ENCODE measurements at regions of chr1 and their contacts with region 1.

Region 1: DNA sequence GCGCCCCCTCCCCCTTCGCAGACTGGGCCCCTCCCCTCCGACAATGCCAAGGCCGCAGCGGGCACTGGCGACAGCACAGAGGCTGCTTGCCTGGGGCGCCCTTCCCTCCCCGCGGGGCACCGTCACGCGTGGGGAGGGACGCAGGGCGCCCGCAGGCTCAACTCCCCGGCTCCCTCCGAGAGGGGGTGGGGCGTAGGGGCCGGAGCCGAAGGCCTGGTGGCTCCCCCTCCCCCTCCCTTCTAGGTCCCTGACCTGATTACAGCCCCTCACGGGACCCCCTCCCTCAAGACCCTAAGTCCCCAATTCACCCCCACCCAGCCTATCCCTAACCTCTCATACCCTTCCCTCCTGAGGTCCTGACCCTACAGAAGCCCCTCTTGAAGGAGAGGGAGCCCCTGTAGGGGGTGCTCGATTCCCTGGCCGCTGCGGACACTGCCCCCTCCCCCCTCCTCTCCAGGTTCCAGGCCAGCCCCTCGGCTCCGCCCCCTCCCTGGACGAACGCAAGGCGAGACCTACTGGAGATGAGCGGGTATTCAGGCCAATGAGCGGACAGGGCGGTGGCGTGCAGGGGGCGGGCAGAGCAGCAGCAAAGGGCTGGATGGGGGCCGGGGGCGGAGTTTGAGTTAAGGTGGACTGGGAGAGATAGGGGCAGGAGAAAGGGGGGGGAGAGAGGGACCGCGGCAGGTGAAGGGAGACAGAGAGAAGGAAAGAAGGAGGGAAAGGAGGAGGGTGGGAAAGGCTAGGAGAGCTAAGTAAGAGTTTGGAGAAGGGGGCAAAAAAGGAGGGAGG is 733 bp upstream of the ZBTB7B start:
- DNase-seq: peak; percentile 95 to 99 (median 97)
- ATAC-seq: peak; percentile 77
- H3K4me3 ChIP-seq: peak overlapping the region; percentile 75 to 99
- H3K4me3 Mint-ChIP-seq: peak overlapping the region; percentile 88
- H3K27ac ChIP-seq: peak overlapping the region; percentile 64 to 90
- H3K27ac Mint-ChIP-seq: peak overlapping the region; percentile 82
- H3K4me1 ChIP-seq: peaks cover 57% of the 10 kb centered on the region
- H3K4me1 Mint-ChIP-seq: peaks cover 59% of the 10 kb centered on the region
- H3K27me3 ChIP-seq: no peaks in the 10 kb centered on the region
- H3K27me3 Mint-ChIP-seq: no peaks in the 10 kb centered on the region
- CTCF ChIP-seq: no peak

Region 2: DNA sequence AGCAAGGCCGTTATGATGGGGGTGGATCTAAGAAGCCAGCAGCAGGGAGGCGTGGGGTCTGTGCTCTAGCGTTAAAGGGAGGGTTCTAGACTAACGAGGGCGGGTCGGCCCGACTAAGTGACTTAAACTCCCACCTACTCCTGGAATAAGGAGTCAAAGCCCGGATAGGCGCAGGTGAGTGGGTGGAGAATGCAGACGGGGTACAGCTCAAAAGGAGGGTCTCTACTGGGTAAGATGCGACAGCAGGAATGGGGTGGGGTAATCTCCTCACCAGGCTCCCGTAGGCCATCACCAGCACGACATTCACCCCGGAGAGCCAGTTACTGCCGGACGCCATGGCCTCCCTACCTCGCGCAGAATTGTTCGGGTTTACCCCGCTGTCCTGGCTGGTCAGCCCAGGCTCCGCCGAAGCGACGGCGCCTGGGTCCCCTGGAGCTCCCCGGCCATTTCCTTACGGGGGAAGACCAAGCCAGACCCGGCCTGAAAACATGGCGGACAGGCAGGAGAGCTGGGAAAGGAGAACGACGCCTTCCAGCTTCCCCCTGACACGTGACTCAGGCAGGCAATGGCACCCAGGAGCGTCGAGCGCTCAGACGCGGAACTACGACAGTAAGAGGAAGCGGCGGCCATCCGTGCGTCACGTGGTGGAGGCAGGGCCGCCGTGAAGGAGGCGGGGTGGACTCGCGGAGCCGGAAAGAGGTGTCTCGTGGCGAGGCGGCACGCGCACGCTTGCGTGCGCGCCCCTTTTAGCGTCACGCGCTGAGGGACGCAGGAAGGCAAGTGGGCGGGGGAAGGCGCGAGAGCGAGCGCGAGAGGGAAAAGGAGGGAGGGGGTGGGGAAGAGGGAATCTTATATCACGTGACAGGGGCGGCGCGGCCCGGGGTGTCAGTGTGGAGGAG is 781.5 kb before region 1 on chr1 and contains the start of gene UBAP2L:
- CTCF ChIA-PET with region 1: no interaction called
- POLR2A ChIA-PET with region 1: no interaction called
- intact Hi-C with region 1: loop called in 1 of 2 experiments (anchors 2 kb)
- DNase-seq: peak; percentile 97 to 100 (median 99)
- ATAC-seq: peak; percentile 82
- H3K4me3 ChIP-seq: peak within 1 kb of the TSS; percentile 68 to 93
- H3K4me3 Mint-ChIP-seq: peak within 1 kb of the TSS; percentile 95
- H3K27ac ChIP-seq: peak within 1 kb of the TSS; percentile 93 to 99
- H3K27ac Mint-ChIP-seq: peak within 1 kb of the TSS; percentile 99
- H3K4me1 ChIP-seq: peaks cover 54% of the 10 kb centered on the region
- H3K4me1 Mint-ChIP-seq: peaks cover 71% of the 10 kb centered on the region
- H3K27me3 ChIP-seq: no peaks in the 10 kb centered on the region
- H3K27me3 Mint-ChIP-seq: no peaks in the 10 kb centered on the region
- CTCF ChIP-seq: no peak
- total RNA-seq, gene UBAP2L: 212 to 226 TPM

Region 3: GRCh38 chr1:154955718-154956543 is 45.9 kb before region 1 on chr1 and contains the start of gene PBXIP1:
- CTCF ChIA-PET with region 1: interaction called, 18 read pairs
- POLR2A ChIA-PET with region 1: interaction called, 9 read pairs
- intact Hi-C with region 1: loop called (anchors 1 kb)
- DNase-seq: peak; percentile 65 to 96 (median 84)
- ATAC-seq: peak; percentile 40
- H3K4me3 ChIP-seq: peak within 1 kb of the TSS; percentile 71 to 76
- H3K4me3 Mint-ChIP-seq: peak within 1 kb of the TSS; percentile 99
- H3K27ac ChIP-seq: peak within 1 kb of the TSS; percentile 98
- H3K27ac Mint-ChIP-seq: peak within 1 kb of the TSS; percentile 99
- H3K4me1 ChIP-seq: peaks cover 60% of the 10 kb centered on the region
- H3K4me1 Mint-ChIP-seq: peaks cover 76% of the 10 kb centered on the region
- H3K27me3 ChIP-seq: no peaks in the 10 kb centered on the region
- H3K27me3 Mint-ChIP-seq: no peaks in the 10 kb centered on the region
- CTCF ChIP-seq: no peak
- total RNA-seq, gene PBXIP1: 315 to 319 TPM

Region 4: GRCh38 chr1:154982897-154983648 is 18.8 kb before region 1 on chr1 and contains the start of gene FLAD1:
- CTCF ChIA-PET with region 1: interaction called, 27 read pairs
- POLR2A ChIA-PET with region 1: interaction called, 8 read pairs
- intact Hi-C with region 1: loop called (anchors 1 kb)
- DNase-seq: peak; percentile 86 to 99 (median 94)
- ATAC-seq: peak; percentile 98
- H3K4me3 ChIP-seq: peak within 1 kb of the TSS; percentile 57 to 86
- H3K4me3 Mint-ChIP-seq: no peak within 1 kb of the TSS
- H3K27ac ChIP-seq: peak within 1 kb of the TSS; percentile 51 to 82
- H3K27ac Mint-ChIP-seq: no peak within 1 kb of the TSS
- H3K4me1 ChIP-seq: peaks cover 12% of the 10 kb centered on the region
- H3K4me1 Mint-ChIP-seq: peaks cover 12% of the 10 kb centered on the region
- H3K27me3 ChIP-seq: no peaks in the 10 kb centered on the region
- H3K27me3 Mint-ChIP-seq: no peaks in the 10 kb centered on the region
- CTCF ChIP-seq: no peak
- total RNA-seq, gene FLAD1: 17.4 to 19.0 TPM

Region 5: DNA sequence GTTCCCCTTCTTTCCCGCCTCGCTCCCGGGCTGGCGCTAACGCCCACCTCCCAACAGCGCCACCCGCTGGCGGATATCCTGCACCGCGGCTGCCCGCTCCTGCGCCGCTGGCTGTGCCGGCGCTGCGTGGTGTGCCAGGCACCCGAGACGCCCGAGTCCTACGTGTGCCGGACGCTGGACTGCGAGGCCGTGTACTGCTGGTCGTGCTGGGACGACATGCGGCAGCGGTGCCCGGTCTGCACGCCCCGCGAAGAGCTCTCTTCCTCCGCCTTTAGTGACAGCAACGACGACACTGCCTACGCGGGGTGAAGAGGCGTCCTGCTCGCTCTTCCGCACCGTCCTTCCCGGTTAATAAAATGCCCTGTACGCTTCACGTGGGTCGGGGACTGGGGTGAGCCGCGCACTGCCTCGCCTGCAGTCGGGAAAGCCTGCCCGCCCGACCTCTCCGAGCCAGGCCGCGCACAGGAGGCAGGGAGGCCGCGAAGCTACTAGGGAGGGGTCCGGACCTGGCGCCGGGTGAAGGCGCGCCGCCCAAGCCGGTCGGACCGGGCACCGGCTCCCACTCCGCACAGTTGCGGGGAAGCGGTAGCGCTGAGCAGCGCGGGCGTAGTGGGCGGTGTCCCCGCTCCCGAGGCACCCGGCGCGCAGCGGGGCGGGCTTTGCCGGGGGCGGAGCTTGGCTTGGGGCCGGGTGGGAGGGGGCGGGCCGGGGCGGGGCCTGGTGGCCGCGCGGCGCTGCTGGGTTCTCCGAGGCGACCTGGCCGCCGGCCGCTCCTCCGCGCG is 48.9 kb after region 1 on chr1 and contains the start of gene ADAM15:
- CTCF ChIA-PET with region 1: no interaction called
- POLR2A ChIA-PET with region 1: interaction called, 3 read pairs
- intact Hi-C with region 1: loop called (anchors 1 to 2 kb)
- DNase-seq: peak; percentile 64 to 88 (median 80)
- ATAC-seq: peak; percentile 83
- H3K4me3 ChIP-seq: peak within 1 kb of the TSS; percentile 86 to 94
- H3K4me3 Mint-ChIP-seq: peak within 1 kb of the TSS; percentile 86
- H3K27ac ChIP-seq: peak within 1 kb of the TSS; percentile 45 to 65
- H3K27ac Mint-ChIP-seq: peak within 1 kb of the TSS; percentile 85
- H3K4me1 ChIP-seq: peaks cover 27% of the 10 kb centered on the region
- H3K4me1 Mint-ChIP-seq: peaks cover 19% of the 10 kb centered on the region
- H3K27me3 ChIP-seq: no peaks in the 10 kb centered on the region
- H3K27me3 Mint-ChIP-seq: no peaks in the 10 kb centered on the region
- CTCF ChIP-seq: peak; percentile 99
- total RNA-seq, gene ADAM15: 10.8 to 11.8 TPM

Region 6: DNA sequence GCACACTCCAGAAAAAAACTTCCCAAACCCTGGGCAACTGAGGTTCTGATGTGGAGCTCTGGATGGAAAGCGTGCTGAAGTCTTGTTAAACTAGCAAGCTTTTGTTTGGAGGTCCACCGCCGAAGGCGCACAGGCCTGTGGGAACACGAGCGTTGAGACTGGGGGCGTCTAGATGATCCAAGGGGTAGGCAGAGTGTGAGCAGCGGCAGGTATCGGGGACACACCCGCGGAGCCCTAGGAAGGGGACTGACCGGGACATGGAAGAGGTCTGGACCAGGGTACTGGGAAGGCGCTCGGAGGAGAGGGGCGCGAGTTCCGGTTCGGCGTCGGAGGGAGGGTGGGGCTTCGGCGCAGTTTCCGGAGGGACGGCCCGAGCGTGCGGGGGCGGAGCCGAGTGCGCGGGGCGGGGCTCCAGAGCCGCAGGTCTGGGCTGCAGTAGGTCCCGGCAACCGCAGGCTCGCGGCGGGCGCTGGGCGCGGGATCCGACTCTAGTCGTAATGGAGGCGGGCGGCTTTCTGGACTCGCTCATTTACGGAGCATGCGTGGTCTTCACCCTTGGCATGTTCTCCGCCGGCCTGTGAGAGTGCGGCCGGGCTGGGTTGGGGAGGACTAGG is 133.7 kb after region 1 on chr1 and contains the start of gene SLC50A1:
- CTCF ChIA-PET with region 1: interaction called, 3 read pairs
- POLR2A ChIA-PET with region 1: no interaction called
- intact Hi-C with region 1: loop called in 1 of 2 experiments (anchors 5 kb)
- DNase-seq: peak; percentile 82 to 96 (median 92)
- ATAC-seq: peak; percentile 84
- H3K4me3 ChIP-seq: peak within 1 kb of the TSS; percentile 93 to 95
- H3K4me3 Mint-ChIP-seq: peak within 1 kb of the TSS; percentile 98
- H3K27ac ChIP-seq: peak within 1 kb of the TSS; percentile 78 to 99
- H3K27ac Mint-ChIP-seq: peak within 1 kb of the TSS; percentile 99
- H3K4me1 ChIP-seq: peaks cover 29% of the 10 kb centered on the region
- H3K4me1 Mint-ChIP-seq: peaks cover 49% of the 10 kb centered on the region
- H3K27me3 ChIP-seq: no peaks in the 10 kb centered on the region
- H3K27me3 Mint-ChIP-seq: no peaks in the 10 kb centered on the region
- CTCF ChIP-seq: no peak
- total RNA-seq, gene SLC50A1: 12.9 to 14.2 TPM

Measured in CD8-positive, alpha-beta T cell (primary cell).